Activated CD4-positive, alpha-beta T cell treated with anti-CD3 and anti-CD28 coated beads for 36 hours (primary cell): ENCODE measurements at regions of chr7 and their contacts with region 1.

Region 1: DNA sequence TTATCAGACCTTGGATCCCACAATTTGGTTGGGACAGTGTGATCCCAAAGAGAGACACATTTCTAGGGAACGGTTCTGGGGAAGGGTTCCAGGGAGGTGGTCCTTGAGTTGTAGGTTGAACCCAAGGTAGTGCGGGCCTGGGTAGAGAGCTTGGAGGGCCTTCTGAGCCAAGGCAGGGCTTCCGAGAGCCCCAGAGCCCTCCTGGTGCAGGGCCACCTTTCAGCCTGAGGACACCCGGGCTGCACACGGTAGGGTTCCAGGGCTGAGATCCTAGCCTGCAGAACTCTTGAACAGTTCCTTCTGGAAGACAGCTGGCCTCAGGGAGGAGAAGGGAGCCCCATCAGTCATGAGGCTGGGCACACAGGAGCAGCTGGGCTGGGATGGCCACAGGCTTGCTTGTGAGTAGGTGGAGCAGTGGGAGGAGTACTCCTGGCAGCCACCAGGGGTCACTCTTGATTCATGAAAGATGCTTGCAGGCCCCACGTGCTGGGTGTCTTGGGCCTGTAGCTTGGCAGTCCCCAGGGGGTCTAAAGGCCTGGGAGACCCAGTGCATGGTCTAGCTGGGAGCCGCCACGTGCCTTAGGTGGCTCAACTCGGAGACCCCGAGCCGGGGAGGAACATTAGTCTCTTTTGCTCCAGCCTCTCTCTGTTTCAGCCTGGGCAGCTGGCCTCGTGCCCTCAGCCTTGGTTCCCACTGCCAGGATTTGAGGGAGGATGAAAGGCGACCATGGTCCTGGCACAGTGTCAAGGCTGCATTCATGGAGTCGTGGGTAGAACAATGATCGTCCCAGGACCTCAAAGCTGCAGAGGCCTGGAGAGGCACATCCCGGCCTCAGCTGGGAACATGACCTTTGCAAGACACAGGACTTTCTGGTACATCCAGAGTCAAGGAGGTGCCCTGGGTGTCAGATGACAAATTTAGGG is 381.6 kb downstream of the TYW1 start:
- DNase-seq: peak; percentile 77
- ATAC-seq: peak; percentile 70
- H3K4me3 Mint-ChIP-seq: no peak overlapping the region
- H3K27ac Mint-ChIP-seq: no peak overlapping the region
- H3K4me1 Mint-ChIP-seq: no peaks in the 10 kb centered on the region
- H3K27me3 Mint-ChIP-seq: peaks cover 11% of the 10 kb centered on the region

Region 2: DNA sequence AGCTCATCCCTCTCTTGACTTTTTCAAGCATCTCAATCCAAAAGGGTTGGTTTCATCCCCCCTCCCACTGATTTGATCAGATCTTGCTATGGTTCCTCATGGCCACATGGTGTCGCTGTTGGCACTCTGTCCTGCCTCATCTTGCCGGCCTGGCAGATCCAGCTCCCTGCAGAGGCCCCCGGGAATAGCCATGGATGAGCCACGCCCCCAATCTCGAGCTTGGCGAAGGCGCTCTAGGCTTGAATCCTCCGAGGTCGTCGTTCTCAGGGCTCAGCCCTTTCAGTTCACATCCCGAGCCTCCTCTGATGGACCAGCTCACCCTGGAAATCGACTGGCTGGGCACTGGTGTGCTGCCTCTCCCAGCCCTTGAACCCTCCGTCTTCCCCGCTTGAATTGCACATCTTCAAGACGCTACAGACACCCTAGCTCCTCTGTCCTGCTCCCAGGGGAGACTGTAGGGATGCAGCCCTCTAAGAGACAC is 247.1 kb after region 1 on chr7:
- CTCF ChIA-PET with region 1: no interaction called
- POLR2A ChIA-PET with region 1: no interaction called
- intact Hi-C with region 1: loop called in 1 of 2 experiments (anchors 1 kb)
- DNase-seq: peak; percentile 62
- ATAC-seq: no peak
- H3K4me3 Mint-ChIP-seq: no peak overlapping the region
- H3K27ac Mint-ChIP-seq: no peak overlapping the region
- H3K4me1 Mint-ChIP-seq: no peaks in the 10 kb centered on the region
- H3K27me3 Mint-ChIP-seq: no peaks in the 10 kb centered on the region